ENCODE measurements at regions of chr1 and their contacts with region 1.

Region 1: GRCh38 chr1:167066333-167067122 is 23.6 kb downstream of the GPA33 start:
- DNase-seq: no peak
- ATAC-seq: peak; percentile 96
- H3K4me3 ChIP-seq: peak overlapping the region; percentile 19 to 42; a peak in 3 of 4 replicates
- H3K27ac ChIP-seq: no peak overlapping the region
- H3K4me1 ChIP-seq: no peaks in the 10 kb centered on the region
- H3K27me3 ChIP-seq: no peaks in the 10 kb centered on the region; the same call in 1 of the 2 replicates
- CTCF ChIP-seq: peak; percentile 98

Region 2: GRCh38 chr1:167082511-167083027 is 16.0 kb after region 1 on chr1:
- CTCF ChIA-PET with region 1: no interaction called
- POLR2A ChIA-PET with region 1: interaction called, 10 read pairs
- in situ Hi-C with region 1: no loop called
- intact Hi-C with region 1: no loop called
- DNase-seq: no peak
- ATAC-seq: peak; percentile 71
- H3K4me3 ChIP-seq: no peak overlapping the region
- H3K27ac ChIP-seq: no peak overlapping the region
- H3K4me1 ChIP-seq: no peaks in the 10 kb centered on the region; the same call in 1 of the 2 replicates
- H3K27me3 ChIP-seq: peaks cover 8% of the 10 kb centered on the region; the same call in 1 of the 2 replicates
- CTCF ChIP-seq: no peak

Region 3: DNA sequence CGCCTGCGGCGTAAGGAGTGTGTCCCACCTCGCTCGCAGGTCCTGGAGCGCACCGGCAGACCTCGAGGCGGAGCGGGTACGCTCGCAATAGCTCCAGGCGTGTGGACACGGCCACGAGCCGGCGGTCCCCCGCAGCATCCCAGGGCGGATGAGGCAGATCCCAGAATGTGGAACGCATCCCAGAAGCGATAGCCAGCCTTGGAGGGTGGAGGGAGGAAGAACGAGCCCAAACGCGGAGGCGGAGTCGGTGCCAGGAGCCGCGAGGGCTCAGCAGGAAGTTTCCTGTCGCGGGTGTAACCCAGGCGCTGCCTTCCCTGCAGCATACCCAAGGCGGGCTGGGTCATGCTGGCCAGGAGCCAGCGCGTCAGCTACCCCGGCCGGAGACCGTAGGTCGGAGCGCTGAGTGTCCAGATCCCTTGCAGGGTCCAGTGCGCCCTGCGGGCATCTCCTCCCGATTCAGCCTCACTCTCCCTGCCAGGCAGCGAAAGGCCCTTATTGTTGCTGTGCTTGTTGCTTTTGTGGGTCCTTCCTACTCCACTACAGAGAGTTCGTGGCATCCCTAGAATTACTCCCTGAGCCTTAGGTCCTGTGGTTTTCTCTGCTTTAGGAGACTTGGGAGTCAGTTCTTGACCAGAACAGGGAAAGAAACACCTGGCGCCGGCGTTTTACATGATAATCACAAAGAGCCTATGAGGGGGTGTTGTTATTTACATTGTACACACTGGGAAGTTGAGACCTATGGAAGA is 55.0 kb after region 1 on chr1:
- CTCF ChIA-PET with region 1: interaction called, 3 read pairs
- POLR2A ChIA-PET with region 1: no interaction called
- in situ Hi-C with region 1: no loop called
- intact Hi-C with region 1: loop called (anchors 2 kb)
- DNase-seq: no peak
- ATAC-seq: peak; percentile 83
- H3K4me3 ChIP-seq: peak overlapping the region; percentile 40 to 47
- H3K27ac ChIP-seq: no peak overlapping the region
- H3K4me1 ChIP-seq: no peaks in the 10 kb centered on the region
- H3K27me3 ChIP-seq: peaks cover 3% of the 10 kb centered on the region
- CTCF ChIP-seq: no peak

Region 4: GRCh38 chr1:167128261-167129227 is 62.0 kb after region 1 on chr1:
- CTCF ChIA-PET with region 1: interaction called, 3 read pairs
- POLR2A ChIA-PET with region 1: no interaction called
- in situ Hi-C with region 1: no loop called
- intact Hi-C with region 1: loop called (anchors 2 kb)
- DNase-seq: no peak
- ATAC-seq: 0 out of 2 replicates have a peak, but pooled peaks have one; percentile 48
- H3K4me3 ChIP-seq: no peak overlapping the region
- H3K27ac ChIP-seq: no peak overlapping the region
- H3K4me1 ChIP-seq: no peaks in the 10 kb centered on the region
- H3K27me3 ChIP-seq: peaks cover 28% of the 10 kb centered on the region
- CTCF ChIP-seq: 0 out of 2 replicates have a peak, but pooled peaks have one; percentile 18

Region 5: GRCh38 chr1:167442124-167442848 is 375.8 kb after region 1 on chr1:
- CTCF ChIA-PET with region 1: no interaction called
- POLR2A ChIA-PET with region 1: no interaction called
- in situ Hi-C with region 1: no loop called
- intact Hi-C with region 1: loop called (anchors 5 kb)
- DNase-seq: peak; percentile 39
- ATAC-seq: peak; percentile 94
- H3K4me3 ChIP-seq: no peak overlapping the region
- H3K27ac ChIP-seq: no peak overlapping the region
- H3K4me1 ChIP-seq: no peaks in the 10 kb centered on the region
- H3K27me3 ChIP-seq: no peaks in the 10 kb centered on the region
- CTCF ChIP-seq: peak; percentile 93

Region 6: DNA sequence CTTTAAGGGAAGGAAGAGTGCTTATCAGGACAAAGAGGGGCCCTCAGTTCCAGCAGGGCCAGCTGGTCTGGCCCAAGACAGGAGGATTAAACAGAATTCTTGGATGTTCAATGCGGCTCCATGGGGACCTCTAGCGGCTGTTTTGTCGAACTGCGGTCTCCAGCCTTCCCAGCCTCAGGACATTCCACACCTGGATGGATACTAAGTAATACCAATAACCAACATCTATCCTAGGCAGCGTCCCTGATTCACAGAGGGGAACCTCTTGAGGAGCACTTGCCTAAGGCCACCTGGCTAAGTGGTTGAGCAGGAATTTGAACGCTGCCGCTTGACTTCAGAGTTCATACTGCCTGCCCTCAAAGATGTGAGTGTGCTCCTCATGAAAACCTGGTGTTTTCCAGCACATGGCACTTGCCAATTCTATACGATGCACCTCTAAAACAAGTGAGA is 467.3 kb after region 1 on chr1:
- CTCF ChIA-PET with region 1: no interaction called
- POLR2A ChIA-PET with region 1: no interaction called
- in situ Hi-C with region 1: no loop called
- intact Hi-C with region 1: loop called (anchors 5 kb)
- DNase-seq: peak; percentile 48
- ATAC-seq: peak; percentile 92
- H3K4me3 ChIP-seq: no peak overlapping the region
- H3K27ac ChIP-seq: no peak overlapping the region
- H3K4me1 ChIP-seq: no peaks in the 10 kb centered on the region
- H3K27me3 ChIP-seq: no peaks in the 10 kb centered on the region; the same call in 1 of the 2 replicates
- CTCF ChIP-seq: peak; percentile 94